Activated T-helper 1 cell treated with anti-CD3 and anti-CD28 coated beads, Interleukin-12 subunit alpha, Interleukin-12 subunit beta, Interleukin-2, Interleukin-4 antibody, amounts not matched to agents 30 ng/mL and 10 ng/mL and 1 ng/mL, durations not matched to agents 14 hours and 24 hours and 36 hours (primary cell): ENCODE measurements at regions of chr15 and their contacts with region 1.

Region 1: GRCh38 chr15:63891079-63891767 is 57.5 kb upstream of the HERC1 start:
- DNase-seq: peak; percentile 59
- H3K4me3 Mint-ChIP-seq: no peak overlapping the region
- H3K27ac Mint-ChIP-seq: peak overlapping the region; percentile 76
- H3K4me1 Mint-ChIP-seq: peaks cover 62% of the 10 kb centered on the region
- H3K27me3 Mint-ChIP-seq: peaks cover 1% of the 10 kb centered on the region

Region 2: GRCh38 chr15:63610200-63610841 is 280.9 kb before region 1 on chr15:
- intact Hi-C with region 1: loop called (anchors 1 kb)
- DNase-seq: peak; percentile 74
- H3K4me3 Mint-ChIP-seq: peak overlapping the region; percentile 38
- H3K27ac Mint-ChIP-seq: peak overlapping the region; percentile 89
- H3K4me1 Mint-ChIP-seq: peaks cover 31% of the 10 kb centered on the region
- H3K27me3 Mint-ChIP-seq: no peaks in the 10 kb centered on the region

Region 3: DNA sequence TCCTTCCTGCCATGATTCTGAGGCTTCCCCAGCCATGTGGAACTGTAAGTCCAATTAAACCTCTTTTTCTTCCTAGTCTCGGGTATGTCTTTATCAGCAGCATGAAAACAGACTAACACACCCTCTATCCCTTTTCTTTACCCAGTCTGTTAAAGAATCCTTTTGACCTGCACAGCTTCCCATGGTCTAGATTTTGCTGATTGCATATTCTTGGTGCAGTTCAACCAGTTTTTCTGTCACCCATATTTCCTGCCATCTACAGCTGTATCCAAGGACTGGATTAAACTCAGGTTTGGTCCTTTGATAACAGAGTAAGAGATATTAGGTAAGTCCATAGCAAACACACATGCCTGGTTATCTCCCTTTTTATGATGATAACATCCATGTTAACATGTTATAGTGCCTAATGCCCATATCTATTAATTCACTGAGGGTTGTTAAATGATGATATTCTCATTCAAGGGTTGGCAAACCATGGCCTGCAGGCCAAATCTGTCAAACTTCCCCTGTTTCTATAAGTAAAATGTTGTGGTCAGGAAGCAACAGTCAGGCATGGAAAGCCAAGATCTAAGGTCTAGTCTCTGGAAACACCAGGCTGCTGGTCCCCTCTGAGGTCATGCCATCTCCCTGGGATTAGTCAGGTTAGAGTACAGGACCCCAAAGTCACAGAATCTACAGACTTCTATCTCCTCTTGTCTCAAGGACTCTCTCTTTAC is 42.6 kb before region 1 on chr15:
- intact Hi-C with region 1: no loop called
- DNase-seq: no peak
- H3K4me3 Mint-ChIP-seq: no peak overlapping the region
- H3K27ac Mint-ChIP-seq: peak overlapping the region; percentile 47
- H3K4me1 Mint-ChIP-seq: peaks cover 16% of the 10 kb centered on the region
- H3K27me3 Mint-ChIP-seq: peaks cover 2% of the 10 kb centered on the region

Region 4: DNA sequence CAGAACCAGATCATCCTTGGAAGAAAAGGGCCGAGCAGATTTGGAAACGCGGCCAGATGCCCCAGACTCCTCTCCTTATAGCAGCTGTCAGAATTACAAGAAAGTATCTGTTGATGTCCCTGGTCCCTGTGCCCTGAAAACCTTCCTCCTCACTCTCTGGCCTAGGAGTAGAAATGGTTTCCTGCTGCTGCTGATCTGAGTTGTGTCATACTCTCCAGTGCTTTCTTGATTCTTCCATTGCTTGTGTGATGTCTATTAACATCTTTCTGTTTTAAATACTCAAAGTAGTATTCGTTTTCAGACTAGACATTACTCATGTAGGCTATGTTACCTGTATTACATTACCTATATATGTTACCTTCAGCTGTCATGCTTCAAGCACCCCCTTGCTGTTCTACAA is 30.7 kb before region 1 on chr15:
- intact Hi-C with region 1: no loop called
- DNase-seq: no peak
- H3K4me3 Mint-ChIP-seq: peak overlapping the region; percentile 20
- H3K27ac Mint-ChIP-seq: peak overlapping the region; percentile 64
- H3K4me1 Mint-ChIP-seq: peaks cover 35% of the 10 kb centered on the region
- H3K27me3 Mint-ChIP-seq: no peaks in the 10 kb centered on the region

Region 5: GRCh38 chr15:63870403-63871209 is 20.6 kb before region 1 on chr15:
- intact Hi-C with region 1: loop called (anchors 1 kb)
- DNase-seq: no peak
- H3K4me3 Mint-ChIP-seq: no peak overlapping the region
- H3K27ac Mint-ChIP-seq: no peak overlapping the region
- H3K4me1 Mint-ChIP-seq: peaks cover 31% of the 10 kb centered on the region
- H3K27me3 Mint-ChIP-seq: no peaks in the 10 kb centered on the region

Region 6: DNA sequence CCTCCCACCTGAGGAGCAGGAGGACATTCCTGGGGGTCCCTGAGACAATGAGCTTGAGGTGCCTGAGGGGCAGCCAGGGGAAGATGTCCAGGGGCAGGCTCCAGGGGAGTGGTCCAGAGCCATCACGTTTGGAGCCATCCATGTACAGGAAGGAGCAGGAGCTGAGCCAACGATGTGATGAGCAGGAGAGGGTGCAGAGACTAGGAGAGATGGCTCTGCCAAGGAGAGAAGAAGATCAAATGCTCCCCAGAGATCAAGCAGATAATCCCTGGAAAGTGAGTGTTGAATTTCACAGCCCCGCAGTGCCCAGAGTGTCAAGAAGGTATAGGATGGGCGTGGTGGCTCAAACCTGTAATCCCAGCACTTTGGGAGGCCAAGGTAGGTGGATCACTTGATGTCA is 40.3 kb after region 1 on chr15:
- intact Hi-C with region 1: no loop called
- DNase-seq: no peak
- H3K4me3 Mint-ChIP-seq: no peak overlapping the region
- H3K27ac Mint-ChIP-seq: no peak overlapping the region
- H3K4me1 Mint-ChIP-seq: peaks cover 19% of the 10 kb centered on the region
- H3K27me3 Mint-ChIP-seq: no peaks in the 10 kb centered on the region

Region 7: GRCh38 chr15:64010719-64011118 is 119.5 kb after region 1 on chr15:
- intact Hi-C with region 1: loop called (anchors 1 kb)
- DNase-seq: peak; percentile 79
- H3K4me3 Mint-ChIP-seq: peak overlapping the region; percentile 64
- H3K27ac Mint-ChIP-seq: peak overlapping the region; percentile 87
- H3K4me1 Mint-ChIP-seq: peaks cover 61% of the 10 kb centered on the region
- H3K27me3 Mint-ChIP-seq: no peaks in the 10 kb centered on the region

Region 8: DNA sequence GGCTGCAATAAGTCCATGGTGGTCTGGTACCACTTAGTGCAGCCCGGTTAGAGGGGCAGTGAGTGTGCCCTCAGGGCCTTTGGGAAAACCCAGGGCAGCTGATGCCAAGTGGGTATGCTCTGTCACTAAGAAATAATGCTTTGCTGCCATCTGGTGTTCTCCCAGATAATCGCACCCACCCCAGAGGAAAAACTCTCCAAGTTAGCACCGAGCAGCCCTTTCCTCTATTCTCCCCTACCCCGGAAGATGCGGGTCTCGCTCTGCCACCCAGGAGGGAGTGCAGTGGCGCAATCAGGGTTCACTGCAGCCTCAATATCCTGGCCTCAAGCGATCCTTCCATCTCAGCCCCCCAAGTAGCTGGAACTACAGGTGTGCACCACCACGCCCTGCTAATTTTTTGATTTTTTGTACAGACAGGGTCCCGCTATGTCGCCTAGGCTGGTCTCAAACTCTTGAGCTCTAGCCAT is 176.4 kb after region 1 on chr15:
- intact Hi-C with region 1: loop called (anchors 1 kb)
- DNase-seq: peak; percentile 63
- H3K4me3 Mint-ChIP-seq: no peak overlapping the region
- H3K27ac Mint-ChIP-seq: no peak overlapping the region
- H3K4me1 Mint-ChIP-seq: peaks cover 10% of the 10 kb centered on the region
- H3K27me3 Mint-ChIP-seq: no peaks in the 10 kb centered on the region